ENCODE measurements at regions of chr2 and their contacts with region 1.

Region 1: GRCh38 chr2:233372855-233373254 is 18.6 kb downstream of the DGKD start:
- DNase-seq: no peak
- ATAC-seq: no peak
- H3K4me3 Mint-ChIP-seq: no peak overlapping the region
- H3K27ac Mint-ChIP-seq: no peak overlapping the region
- H3K4me1 Mint-ChIP-seq: peaks cover 24% of the 10 kb centered on the region
- H3K27me3 Mint-ChIP-seq: no peaks in the 10 kb centered on the region

Region 2: GRCh38 chr2:233387667-233388528 is 15.0 kb after region 1 on chr2:
- CTCF ChIA-PET with region 1: interaction called, 10 read pairs
- POLR2A ChIA-PET with region 1: no interaction called
- intact Hi-C with region 1: no loop called
- DNase-seq: no peak
- ATAC-seq: no peak
- H3K4me3 Mint-ChIP-seq: no peak overlapping the region
- H3K27ac Mint-ChIP-seq: no peak overlapping the region
- H3K4me1 Mint-ChIP-seq: peaks cover 51% of the 10 kb centered on the region
- H3K27me3 Mint-ChIP-seq: no peaks in the 10 kb centered on the region

Measured in activated CD4-positive, alpha-beta T cell treated with anti-CD3 and anti-CD28 coated beads for 36 hours (primary cell).